ENCODE measurements at regions of chr11 and their contacts with region 1.

Region 1: GRCh38 chr11:72446902-72447769 is 12.8 kb upstream of the CLPB start:
- DNase-seq: peak; percentile 24
- H3K4me3 ChIP-seq: no peak overlapping the region
- H3K27ac ChIP-seq: no peak overlapping the region
- H3K27me3 ChIP-seq: peaks cover 7% of the 10 kb centered on the region
- CTCF ChIP-seq: peak; percentile 82

Region 2: DNA sequence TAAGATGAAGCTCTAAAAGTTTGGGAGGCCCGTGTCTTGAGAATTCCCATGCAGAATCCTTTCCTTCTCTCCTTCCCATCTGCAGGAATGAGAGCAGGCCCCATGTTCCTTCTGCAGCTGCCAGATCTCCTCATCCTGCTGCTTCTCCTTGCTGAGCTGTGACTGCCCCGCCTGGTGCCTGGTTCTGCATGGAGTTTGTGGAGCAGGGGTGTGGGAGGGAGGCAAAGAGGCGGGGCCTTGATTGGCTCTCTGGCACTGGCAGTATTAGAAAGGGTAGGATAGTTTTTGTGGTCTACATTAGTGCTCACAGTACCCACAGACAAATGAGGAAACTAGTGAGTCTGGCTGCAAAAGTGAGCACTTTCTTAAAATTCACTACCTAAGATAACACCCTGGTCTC is 78.3 kb after region 1 on chr11:
- CTCF ChIA-PET with region 1: interaction called, 10 read pairs
- POLR2A ChIA-PET with region 1: no interaction called
- DNase-seq: no peak
- H3K4me3 ChIP-seq: no peak overlapping the region
- H3K27ac ChIP-seq: no peak overlapping the region
- H3K27me3 ChIP-seq: peaks cover 20% of the 10 kb centered on the region
- CTCF ChIP-seq: no peak

Region 3: DNA sequence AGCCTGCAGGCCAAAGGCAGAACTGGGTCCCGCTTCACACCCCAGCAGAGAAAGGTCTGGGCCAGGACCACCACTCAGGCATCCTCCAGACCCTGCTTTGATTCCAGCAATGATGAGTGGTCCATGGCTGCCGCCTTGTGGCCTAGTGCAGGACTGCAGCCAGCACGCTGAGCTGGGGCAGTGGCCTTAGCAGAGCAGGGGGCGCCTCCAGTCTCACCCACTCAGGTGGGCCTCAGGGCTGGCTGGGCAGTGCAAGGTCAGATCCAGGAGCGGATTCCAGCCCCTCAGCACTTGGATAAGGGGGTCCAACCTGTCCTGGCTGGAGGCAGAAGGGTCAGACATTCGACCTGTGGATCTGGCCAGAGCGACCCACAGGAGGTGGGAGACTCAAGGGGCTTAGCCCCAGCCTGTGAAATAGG is 236.7 kb after region 1 on chr11:
- CTCF ChIA-PET with region 1: no interaction called
- POLR2A ChIA-PET with region 1: no interaction called
- DNase-seq: no peak
- H3K4me3 ChIP-seq: no peak overlapping the region
- H3K27ac ChIP-seq: no peak overlapping the region
- H3K27me3 ChIP-seq: peaks cover 8% of the 10 kb centered on the region
- CTCF ChIP-seq: peak; percentile 91

Measured in AG04450 (cell line).